Aorta (tissue), 5 donors: ENCODE measurements at regions of chr1 and their contacts with region 1.

Region 1: GRCh38 chr1:47997289-47998200 is at the start of gene TRABD2B:
- DNase-seq: peak; percentile 86 to 95
- ATAC-seq: peak; percentile 90
- H3K4me3 ChIP-seq: peak within 1 kb of the TSS; percentile 80 to 92
- H3K27ac ChIP-seq: peak within 1 kb of the TSS in 1 of 2 donors; percentile 45
- H3K4me1 ChIP-seq: no peaks in the 10 kb centered on the region
- H3K27me3 ChIP-seq: no peaks in the 10 kb centered on the region
- total RNA-seq, gene TRABD2B: 10.6 to 13.3 TPM

Region 2: GRCh38 chr1:47763591-47764171 is 233.9 kb before region 1 on chr1:
- intact Hi-C with region 1: loop called in 1 of 2 experiments (anchors 5 kb)
- DNase-seq: peak; percentile 72 to 73
- ATAC-seq: no peak
- H3K4me3 ChIP-seq: no peak overlapping the region
- H3K27ac ChIP-seq: peak overlapping the region in 1 of 2 donors; percentile 82
- H3K4me1 ChIP-seq: peaks cover 0 to 8% of the 10 kb centered on the region in 2 donors
- H3K27me3 ChIP-seq: no peaks in the 10 kb centered on the region

Region 3: GRCh38 chr1:48039088-48040054 is 41.8 kb after region 1 on chr1:
- intact Hi-C with region 1: no loop called
- DNase-seq: no peak
- ATAC-seq: no peak
- H3K4me3 ChIP-seq: no peak overlapping the region
- H3K27ac ChIP-seq: no peak overlapping the region
- H3K4me1 ChIP-seq: no peaks in the 10 kb centered on the region
- H3K27me3 ChIP-seq: no peaks in the 10 kb centered on the region

Region 4: DNA sequence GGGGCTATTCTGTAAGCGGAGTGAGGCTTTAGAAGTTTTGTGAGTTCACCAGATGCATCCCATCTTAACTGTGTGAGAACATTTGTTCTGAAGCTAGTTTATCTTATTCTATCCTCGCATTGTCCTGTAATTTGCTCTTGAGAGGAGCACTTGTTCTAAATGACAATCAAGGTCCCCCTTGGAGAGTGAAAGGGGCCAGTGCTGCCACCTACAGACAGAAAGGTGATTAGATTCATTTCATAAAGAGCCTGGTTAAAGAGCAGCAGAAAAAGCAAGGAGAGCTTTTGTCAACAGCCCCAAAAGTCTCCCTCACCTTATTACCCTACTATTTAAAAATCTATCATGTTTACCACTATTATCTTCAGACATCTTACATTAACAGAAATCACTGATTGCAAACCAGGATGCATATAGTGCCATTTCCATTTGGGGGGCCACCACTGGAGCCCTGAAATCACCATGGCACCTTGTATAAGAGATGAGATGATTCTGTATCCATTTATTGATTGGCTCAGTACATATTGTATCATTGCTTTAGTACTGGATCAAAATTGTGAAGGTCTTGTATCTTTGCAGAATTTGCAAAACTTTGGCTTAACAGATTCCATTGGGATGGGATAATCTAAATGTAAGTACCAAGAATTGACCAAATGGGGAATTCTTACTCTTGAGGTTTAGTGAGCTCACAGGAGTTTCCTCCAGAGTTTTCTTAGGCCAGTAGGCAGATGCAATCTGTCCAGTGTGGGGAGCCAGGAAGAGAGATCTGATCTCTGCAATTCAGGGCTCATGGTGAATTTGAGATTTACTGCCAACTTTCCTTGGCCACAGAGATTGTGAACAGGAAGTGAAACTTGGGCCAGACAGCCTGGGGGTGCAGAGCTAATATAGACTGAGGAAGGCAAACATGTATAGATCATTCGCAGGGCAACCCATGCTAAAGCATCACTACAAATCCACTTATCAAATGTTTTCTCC is 63.9 kb after region 1 on chr1:
- intact Hi-C with region 1: loop called (anchors 1 to 2 kb)
- DNase-seq: peak in 1 of 2 donors; percentile 78
- ATAC-seq: peak; percentile 65
- H3K4me3 ChIP-seq: no peak overlapping the region
- H3K27ac ChIP-seq: no peak overlapping the region
- H3K4me1 ChIP-seq: no peaks in the 10 kb centered on the region
- H3K27me3 ChIP-seq: no peaks in the 10 kb centered on the region

Region 5: DNA sequence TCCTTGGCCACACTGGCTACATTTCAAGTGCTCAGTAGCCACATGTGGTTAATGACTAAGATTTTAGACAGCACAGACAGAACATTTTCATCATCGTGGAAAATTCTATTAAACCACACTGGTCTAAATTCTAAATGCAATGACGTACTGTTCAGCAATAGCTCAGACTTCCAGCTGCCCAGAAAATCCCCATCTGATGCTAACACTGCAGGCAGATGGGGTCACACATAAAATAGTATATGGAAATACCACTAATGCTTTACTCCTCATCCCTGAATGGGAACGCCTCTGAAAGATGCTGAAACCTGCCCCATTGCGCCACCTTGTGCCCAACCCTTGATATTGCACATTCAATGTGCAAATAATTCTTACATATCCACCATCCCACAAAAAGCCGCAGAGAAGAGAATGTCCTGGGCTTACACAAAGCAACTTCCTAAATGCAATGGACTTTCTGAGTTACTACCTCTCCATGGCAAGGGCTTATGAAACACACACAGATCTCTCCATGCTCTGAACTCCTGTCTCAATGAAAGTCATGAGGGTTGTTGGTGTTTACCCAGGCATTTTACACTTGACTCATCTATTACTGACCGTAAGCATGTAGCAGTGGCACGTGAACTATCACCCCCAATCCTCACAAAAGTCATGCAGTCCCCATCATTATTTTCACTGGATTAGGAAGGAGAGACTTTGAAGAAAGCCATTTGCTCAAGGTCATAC is 204.6 kb after region 1 on chr1:
- intact Hi-C with region 1: loop called in 1 of 2 experiments (anchors 5 kb)
- DNase-seq: peak; percentile 76 to 91
- ATAC-seq: peak; percentile 92
- H3K4me3 ChIP-seq: no peak overlapping the region
- H3K27ac ChIP-seq: no peak overlapping the region
- H3K4me1 ChIP-seq: no peaks in the 10 kb centered on the region
- H3K27me3 ChIP-seq: no peaks in the 10 kb centered on the region